ENCODE measurements at regions of chr12 and their contacts with region 1.

Region 1: GRCh38 chr12:94101738-94102660 is 46.4 kb upstream of the PLXNC1 start:
- DNase-seq: peak; percentile 56
- ATAC-seq: peak; percentile 93
- H3K4me3 ChIP-seq: peak overlapping the region; percentile 78
- H3K27ac ChIP-seq: no peak overlapping the region
- H3K4me1 ChIP-seq: no peaks in the 10 kb centered on the region; the same call in 1 of the 2 replicates
- H3K27me3 ChIP-seq: peaks cover 0 to 2% of the 10 kb centered on the region in 2 experiments; a peak in 2 of 4 replicates
- CTCF ChIP-seq: peak; percentile 79 to 97 (median 82); a peak in 5 of 6 replicates
- EP300 ChIP-seq: no peak
- POLR2A ChIP-seq: no peak
- RAD21 ChIP-seq: peak; percentile 93

Region 2: DNA sequence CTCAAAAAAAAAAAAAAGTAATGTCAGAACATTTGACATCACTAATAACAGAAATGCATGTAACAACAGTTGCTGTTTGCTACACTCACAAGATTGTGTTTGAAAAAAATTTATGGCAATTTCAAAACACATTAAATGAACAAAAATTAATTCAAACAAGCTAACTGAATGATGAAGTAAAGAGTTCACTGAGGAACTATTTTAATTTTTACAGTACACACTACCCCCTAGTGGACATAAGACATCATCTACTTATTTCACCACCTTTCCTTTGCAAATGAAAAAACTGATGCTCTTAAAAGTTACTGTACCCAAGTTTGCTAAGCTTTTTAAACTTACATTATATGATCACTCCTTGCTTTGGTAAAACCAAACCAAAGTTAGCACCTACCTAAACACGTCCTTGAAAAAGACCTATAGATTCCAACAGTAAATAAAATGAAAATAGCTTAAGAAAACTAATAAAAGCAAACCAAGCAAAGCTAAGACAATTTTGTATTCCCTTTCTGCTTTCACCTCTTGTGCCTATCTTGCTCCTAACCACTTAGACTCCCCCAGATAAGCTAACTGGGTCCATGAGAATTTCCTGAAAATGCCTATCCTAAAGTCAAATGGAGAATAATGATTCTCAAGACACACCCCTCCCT is 682.5 kb before region 1 on chr12:
- CTCF ChIA-PET with region 1: interaction called, 30 read pairs
- POLR2A ChIA-PET with region 1: no interaction called
- RAD21 ChIA-PET with region 1: interaction called, 13 read pairs
- SMC1A ChIA-PET with region 1: interaction called, 7 read pairs
- in situ Hi-C with region 1: no loop called
- intact Hi-C with region 1: loop called (anchors 5 kb)
- DNase-seq: no peak
- ATAC-seq: peak; percentile 54
- H3K4me3 ChIP-seq: no peak overlapping the region
- H3K27ac ChIP-seq: no peak overlapping the region
- H3K4me1 ChIP-seq: peaks cover 83% of the 10 kb centered on the region
- H3K27me3 ChIP-seq: no peaks in the 10 kb centered on the region
- CTCF ChIP-seq: peak; percentile 48 to 58 (median 54); a peak in 5 of 6 replicates
- EP300 ChIP-seq: no peak
- POLR2A ChIP-seq: no peak
- RAD21 ChIP-seq: peak; percentile 46; the same call in 1 of the 2 replicates

Region 3: GRCh38 chr12:93536766-93537488 is 565.1 kb before region 1 on chr12:
- CTCF ChIA-PET with region 1: interaction called, 15 read pairs
- POLR2A ChIA-PET with region 1: no interaction called
- RAD21 ChIA-PET with region 1: interaction called, 12 read pairs
- SMC1A ChIA-PET with region 1: interaction called, 8 read pairs
- in situ Hi-C with region 1: no loop called
- intact Hi-C with region 1: no loop called
- DNase-seq: peak; percentile 15
- ATAC-seq: peak; percentile 82
- H3K4me3 ChIP-seq: no peak overlapping the region
- H3K27ac ChIP-seq: no peak overlapping the region
- H3K4me1 ChIP-seq: peaks cover 10% of the 10 kb centered on the region
- H3K27me3 ChIP-seq: no peaks in the 10 kb centered on the region
- CTCF ChIP-seq: no peak
- EP300 ChIP-seq: no peak
- POLR2A ChIP-seq: no peak
- RAD21 ChIP-seq: no peak

Region 4: GRCh38 chr12:93699271-93700145 is 402.5 kb before region 1 on chr12:
- CTCF ChIA-PET with region 1: no interaction called
- POLR2A ChIA-PET with region 1: no interaction called
- RAD21 ChIA-PET with region 1: no interaction called
- SMC1A ChIA-PET with region 1: no interaction called
- in situ Hi-C with region 1: no loop called
- intact Hi-C with region 1: no loop called
- DNase-seq: no peak
- ATAC-seq: no peak
- H3K4me3 ChIP-seq: no peak overlapping the region
- H3K27ac ChIP-seq: no peak overlapping the region
- H3K4me1 ChIP-seq: peaks cover 11% of the 10 kb centered on the region
- H3K27me3 ChIP-seq: no peaks in the 10 kb centered on the region
- CTCF ChIP-seq: no peak
- EP300 ChIP-seq: no peak
- POLR2A ChIP-seq: no peak
- RAD21 ChIP-seq: no peak

Region 5: DNA sequence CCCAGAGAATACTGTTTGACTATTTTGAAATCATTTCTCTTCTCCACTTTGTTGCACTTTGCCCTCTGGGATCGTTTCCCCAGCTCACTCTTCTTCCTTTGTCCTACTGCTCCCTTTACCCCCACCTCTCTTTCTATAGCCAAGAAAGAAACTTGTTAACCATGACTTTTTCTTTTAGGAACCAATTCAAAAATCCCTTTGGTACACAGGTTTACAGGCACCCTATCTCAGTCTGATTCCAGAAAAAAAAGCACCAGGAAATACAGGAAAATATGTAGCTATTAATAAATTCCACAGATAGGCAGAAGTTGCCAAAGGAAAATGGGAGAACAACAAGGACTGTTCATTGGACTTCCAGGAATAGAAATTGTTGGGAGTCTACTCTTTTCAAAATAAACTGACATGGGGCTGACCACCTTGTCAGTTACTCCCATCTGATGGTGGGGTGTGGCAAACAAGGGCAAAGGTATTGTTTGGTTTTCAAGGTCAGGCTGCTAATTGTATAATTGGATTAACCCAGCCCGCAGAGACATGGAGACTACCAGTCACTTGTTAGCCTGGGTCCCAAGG is 342.4 kb before region 1 on chr12:
- CTCF ChIA-PET with region 1: interaction called, 13 read pairs
- POLR2A ChIA-PET with region 1: no interaction called
- RAD21 ChIA-PET with region 1: no interaction called
- SMC1A ChIA-PET with region 1: interaction called, 46 read pairs
- in situ Hi-C with region 1: no loop called
- intact Hi-C with region 1: no loop called
- DNase-seq: no peak
- ATAC-seq: no peak
- H3K4me3 ChIP-seq: no peak overlapping the region
- H3K27ac ChIP-seq: no peak overlapping the region
- H3K4me1 ChIP-seq: no peaks in the 10 kb centered on the region
- H3K27me3 ChIP-seq: no peaks in the 10 kb centered on the region
- CTCF ChIP-seq: no peak
- EP300 ChIP-seq: no peak
- POLR2A ChIP-seq: no peak
- RAD21 ChIP-seq: no peak

Region 6: DNA sequence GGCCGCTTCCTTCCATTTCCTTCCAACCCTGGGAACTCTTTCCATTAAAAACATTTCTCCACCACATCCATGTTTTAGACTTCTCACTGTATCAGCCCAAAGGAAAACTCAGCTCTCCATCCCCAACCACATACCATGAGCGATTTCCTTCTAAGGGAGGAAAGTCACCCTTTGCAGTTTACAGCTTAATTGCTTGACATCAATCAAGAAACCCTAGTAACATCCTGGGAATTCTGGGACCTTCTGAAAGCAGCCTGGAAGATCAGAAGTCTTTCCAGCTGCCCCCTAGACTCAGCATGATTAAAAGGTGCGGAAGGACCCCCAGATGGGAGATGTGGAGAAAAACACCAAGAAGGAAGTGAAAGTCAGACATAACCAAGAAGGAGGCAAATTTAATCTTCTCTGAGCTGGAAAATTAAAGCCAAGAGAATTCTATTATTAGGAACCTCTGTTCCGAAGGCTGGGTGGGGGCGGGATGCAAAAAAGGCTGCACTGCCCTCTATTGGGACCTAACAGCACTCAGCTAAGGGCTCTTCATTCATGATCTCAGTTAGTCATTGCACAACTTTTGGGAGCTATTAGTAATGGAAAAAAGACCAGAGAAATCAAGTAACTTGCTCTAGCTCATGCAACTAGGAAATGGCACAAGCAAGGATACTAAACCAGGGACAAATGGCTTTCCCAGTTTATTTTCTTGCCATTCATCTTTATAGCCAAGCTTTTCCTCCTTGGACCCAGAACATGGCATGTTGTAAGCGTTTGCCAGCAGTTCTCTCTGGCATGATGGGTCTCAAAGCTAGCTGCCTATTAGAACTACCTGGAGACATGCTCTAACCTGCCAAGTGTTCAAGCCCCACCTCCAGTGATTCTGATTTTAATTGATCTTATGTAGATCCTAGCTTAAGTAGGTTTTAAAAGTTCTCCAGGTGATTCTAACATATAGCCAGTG is 26.7 kb before region 1 on chr12:
- CTCF ChIA-PET with region 1: interaction called, 62 read pairs
- POLR2A ChIA-PET with region 1: no interaction called
- RAD21 ChIA-PET with region 1: interaction called, 22 read pairs
- SMC1A ChIA-PET with region 1: interaction called, 16 read pairs
- in situ Hi-C with region 1: no loop called
- intact Hi-C with region 1: no loop called
- DNase-seq: no peak
- ATAC-seq: peak; percentile 56; the same call in 2 of the 3 replicates
- H3K4me3 ChIP-seq: no peak overlapping the region
- H3K27ac ChIP-seq: no peak overlapping the region
- H3K4me1 ChIP-seq: no peaks in the 10 kb centered on the region
- H3K27me3 ChIP-seq: no peaks in the 10 kb centered on the region; a peak in 1 of 4 replicates
- CTCF ChIP-seq: peak; percentile 30 to 41 (median 40); a peak in 4 of 6 replicates
- EP300 ChIP-seq: no peak
- POLR2A ChIP-seq: no peak
- RAD21 ChIP-seq: peak; percentile 46

Region 7: DNA sequence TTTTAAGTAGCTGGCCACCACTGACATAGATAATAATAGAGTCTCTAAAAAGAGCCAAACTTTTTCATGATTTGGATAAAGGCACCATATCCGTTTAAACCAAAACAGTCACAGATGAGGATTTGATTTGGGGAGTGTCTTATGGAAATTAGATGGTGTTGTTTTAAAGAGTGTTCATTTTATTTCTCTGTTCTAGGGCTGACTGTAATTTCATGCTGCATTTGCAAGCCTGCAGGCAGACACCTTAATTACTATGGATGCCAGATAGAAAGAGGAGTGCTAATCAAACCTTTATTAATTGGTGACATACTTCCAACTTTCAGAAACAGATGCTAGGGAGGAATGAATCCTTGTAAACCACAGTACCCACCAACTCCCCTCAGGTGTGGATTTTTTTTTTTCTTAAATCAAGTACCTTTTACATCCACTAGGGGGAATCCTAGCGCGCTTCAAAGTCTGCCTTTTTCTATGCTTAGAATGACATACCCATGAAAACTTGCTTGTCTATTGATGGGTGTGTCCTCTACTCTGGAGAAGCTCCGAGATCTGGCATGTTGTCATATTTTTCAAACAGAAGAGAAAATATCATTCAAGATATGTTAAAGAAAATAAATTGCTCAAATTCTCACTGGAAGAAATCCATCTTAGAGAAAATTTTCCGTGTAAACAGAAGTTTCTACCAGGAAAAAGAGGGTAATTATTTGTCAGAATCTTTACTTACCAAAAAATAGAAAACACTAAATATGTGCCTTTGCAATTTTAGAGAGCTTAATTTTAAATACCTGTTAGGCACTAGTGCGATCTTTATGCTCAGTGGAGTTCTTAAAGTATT is 32.2 kb after region 1 on chr12:
- CTCF ChIA-PET with region 1: interaction called, 12 read pairs
- POLR2A ChIA-PET with region 1: no interaction called
- RAD21 ChIA-PET with region 1: interaction called, 5 read pairs
- SMC1A ChIA-PET with region 1: interaction called, 4 read pairs
- in situ Hi-C with region 1: no loop called
- intact Hi-C with region 1: no loop called
- DNase-seq: no peak
- ATAC-seq: peak; percentile 97
- H3K4me3 ChIP-seq: no peak overlapping the region
- H3K27ac ChIP-seq: no peak overlapping the region
- H3K4me1 ChIP-seq: no peaks in the 10 kb centered on the region; the same call in 1 of the 2 replicates
- H3K27me3 ChIP-seq: no peaks in the 10 kb centered on the region
- CTCF ChIP-seq: peak; percentile 66 to 73 (median 70)
- EP300 ChIP-seq: no peak
- POLR2A ChIP-seq: no peak
- RAD21 ChIP-seq: peak; percentile 83

Region 8: DNA sequence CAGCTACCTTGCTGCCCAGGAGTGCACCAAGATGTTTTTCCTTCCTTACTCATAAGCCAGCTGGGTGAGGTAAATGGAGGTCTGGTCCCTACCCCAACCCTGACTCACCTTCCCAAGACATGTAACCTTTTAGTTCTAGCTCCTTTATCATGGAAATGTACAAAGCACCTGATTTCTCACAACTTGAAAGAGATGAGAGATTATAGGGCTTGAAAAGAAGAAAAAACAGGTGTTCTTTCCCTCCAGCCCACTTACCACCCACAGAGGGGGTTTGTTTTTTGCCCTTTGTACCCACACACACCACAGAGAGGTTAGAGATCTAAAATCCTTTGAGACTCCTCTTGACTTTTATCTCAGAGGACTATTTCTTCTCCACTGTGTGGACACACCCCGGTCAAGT is 67.5 kb after region 1 on chr12:
- CTCF ChIA-PET with region 1: no interaction called
- POLR2A ChIA-PET with region 1: no interaction called
- RAD21 ChIA-PET with region 1: no interaction called
- SMC1A ChIA-PET with region 1: no interaction called
- in situ Hi-C with region 1: no loop called
- intact Hi-C with region 1: no loop called
- DNase-seq: no peak
- ATAC-seq: no peak
- H3K4me3 ChIP-seq: no peak overlapping the region
- H3K27ac ChIP-seq: no peak overlapping the region
- H3K4me1 ChIP-seq: peaks cover 28% of the 10 kb centered on the region
- H3K27me3 ChIP-seq: no peaks in the 10 kb centered on the region
- CTCF ChIP-seq: no peak
- EP300 ChIP-seq: no peak
- POLR2A ChIP-seq: no peak
- RAD21 ChIP-seq: no peak